SK-N-SH (cell line): ENCODE measurements at regions of chr11 and their contacts with region 1.

Region 1: GRCh38 chr11:72683782-72684200 is 9.6 kb upstream of the PDE2A start:
- DNase-seq: peak; percentile 91
- H3K4me3 ChIP-seq: peak overlapping the region in 1 of 2 experiments; percentile 40; a peak in 1 of 4 replicates
- H3K27ac ChIP-seq: no peak overlapping the region
- H3K4me1 ChIP-seq: peaks cover 0 to 20% of the 10 kb centered on the region in 2 experiments; a peak in 1 of 4 replicates
- H3K27me3 ChIP-seq: no peaks in the 10 kb centered on the region
- CTCF ChIP-seq: peak; percentile 86
- EP300 ChIP-seq: no peak
- RAD21 ChIP-seq: peak; percentile 88

Region 2: GRCh38 chr11:72471005-72471898 is 212.5 kb before region 1 on chr11:
- CTCF ChIA-PET with region 1: interaction called, 47 read pairs
- POLR2A ChIA-PET with region 1: no interaction called
- DNase-seq: peak; percentile 76
- H3K4me3 ChIP-seq: peak overlapping the region in 1 of 2 experiments; percentile 17; a peak in 1 of 4 replicates
- H3K27ac ChIP-seq: no peak overlapping the region
- H3K4me1 ChIP-seq: no peaks in the 10 kb centered on the region; a peak in 1 of 4 replicates
- H3K27me3 ChIP-seq: peaks cover 14% of the 10 kb centered on the region
- CTCF ChIP-seq: peak; percentile 81
- EP300 ChIP-seq: no peak
- RAD21 ChIP-seq: peak; percentile 87

Region 3: GRCh38 chr11:72579816-72580641 is 103.8 kb before region 1 on chr11:
- CTCF ChIA-PET with region 1: interaction called, 36 read pairs
- POLR2A ChIA-PET with region 1: no interaction called
- DNase-seq: no peak
- H3K4me3 ChIP-seq: no peak overlapping the region
- H3K27ac ChIP-seq: no peak overlapping the region
- H3K4me1 ChIP-seq: no peaks in the 10 kb centered on the region
- H3K27me3 ChIP-seq: no peaks in the 10 kb centered on the region; the same call in 1 of the 2 replicates
- CTCF ChIP-seq: no peak
- EP300 ChIP-seq: no peak
- RAD21 ChIP-seq: no peak

Region 4: DNA sequence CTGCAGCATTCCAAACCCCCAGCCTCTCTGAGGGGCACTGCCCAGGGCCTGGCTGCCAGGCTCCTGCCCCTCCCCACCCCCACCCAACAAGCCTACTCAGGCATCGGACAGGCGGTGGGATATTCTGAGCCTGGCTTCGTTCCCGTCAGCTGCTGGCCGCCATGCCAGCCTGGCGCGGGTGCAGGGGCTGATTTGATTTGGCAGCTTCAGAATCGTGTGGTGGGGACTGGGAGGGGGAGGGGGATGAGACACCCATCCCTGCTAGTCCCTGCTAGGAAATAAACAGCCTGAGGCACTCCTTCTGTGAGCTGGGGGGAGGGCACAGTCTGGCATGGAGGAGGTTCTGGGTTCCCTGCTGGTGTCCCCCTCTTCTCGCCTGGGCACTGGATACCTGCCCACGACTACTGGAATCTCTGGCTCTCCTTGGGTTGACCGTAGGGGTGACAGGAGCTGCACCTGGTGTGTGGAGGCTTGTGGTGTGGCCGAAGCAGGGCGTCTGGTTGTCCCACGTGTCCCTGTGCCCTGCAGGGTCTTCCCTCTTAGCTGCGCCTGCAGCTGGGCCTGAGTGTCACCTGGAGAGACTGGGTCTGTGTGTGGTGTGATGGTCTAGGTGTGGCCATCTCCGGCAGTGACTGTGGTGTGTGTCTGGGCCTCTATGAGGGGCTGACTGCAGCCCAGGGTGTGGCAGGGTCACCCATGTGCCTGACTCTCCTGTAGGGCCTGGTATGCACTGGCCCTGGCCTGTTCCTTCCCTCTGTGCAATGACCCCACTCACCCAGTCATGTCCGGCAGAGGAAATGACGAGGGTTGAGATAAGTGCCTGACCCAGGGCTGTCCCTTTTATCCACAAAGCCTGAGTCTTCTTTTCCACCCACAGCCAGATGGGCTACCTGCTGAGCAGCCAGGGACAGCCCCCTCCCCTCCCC is 51.7 kb before region 1 on chr11:
- CTCF ChIA-PET with region 1: interaction called, 39 read pairs
- POLR2A ChIA-PET with region 1: no interaction called
- DNase-seq: peak; percentile 80
- H3K4me3 ChIP-seq: no peak overlapping the region
- H3K27ac ChIP-seq: peak overlapping the region in 1 of 2 experiments; percentile 88; a peak in 2 of 4 replicates
- H3K4me1 ChIP-seq: peaks cover 0 to 94% of the 10 kb centered on the region in 2 experiments; a peak in 2 of 4 replicates
- H3K27me3 ChIP-seq: no peaks in the 10 kb centered on the region; the same call in 1 of the 2 replicates
- CTCF ChIP-seq: no peak
- EP300 ChIP-seq: peak in 1 of 2 experiments; percentile 56; a peak in 1 of 4 replicates
- RAD21 ChIP-seq: peak; percentile 3; the same call in 1 of the 2 replicates

Region 5: GRCh38 chr11:72668611-72669347 is 15.0 kb before region 1 on chr11:
- CTCF ChIA-PET with region 1: interaction called, 90 read pairs
- POLR2A ChIA-PET with region 1: interaction called, 3 read pairs
- DNase-seq: no peak
- H3K4me3 ChIP-seq: no peak overlapping the region
- H3K27ac ChIP-seq: no peak overlapping the region
- H3K4me1 ChIP-seq: peaks cover 0 to 10% of the 10 kb centered on the region in 2 experiments; a peak in 1 of 4 replicates
- H3K27me3 ChIP-seq: peaks cover 13% of the 10 kb centered on the region; the same call in 1 of the 2 replicates
- CTCF ChIP-seq: no peak
- EP300 ChIP-seq: no peak
- RAD21 ChIP-seq: no peak

Region 6: GRCh38 chr11:72712168-72712751 is 28.5 kb after region 1 on chr11:
- CTCF ChIA-PET with region 1: interaction called, 19 read pairs
- POLR2A ChIA-PET with region 1: no interaction called
- DNase-seq: peak; percentile 52
- H3K4me3 ChIP-seq: no peak overlapping the region
- H3K27ac ChIP-seq: peak overlapping the region in 1 of 2 experiments; percentile 51; a peak in 2 of 4 replicates
- H3K4me1 ChIP-seq: peaks cover 0 to 33% of the 10 kb centered on the region in 2 experiments; a peak in 1 of 4 replicates
- H3K27me3 ChIP-seq: no peaks in the 10 kb centered on the region
- CTCF ChIP-seq: no peak
- EP300 ChIP-seq: no peak
- RAD21 ChIP-seq: no peak